ENCODE measurements at regions of chr21 and their contacts with region 1.

Region 1: GRCh38 chr21:27636656-27637055 is 669.8 kb upstream of the ADAMTS5 start:
- DNase-seq: no peak
- ATAC-seq: no peak
- H3K4me3 ChIP-seq: no peak overlapping the region
- H3K27ac ChIP-seq: no peak overlapping the region
- H3K4me1 ChIP-seq: no peaks in the 10 kb centered on the region
- H3K27me3 ChIP-seq: no peaks in the 10 kb centered on the region
- CTCF ChIP-seq: no peak

Region 2: DNA sequence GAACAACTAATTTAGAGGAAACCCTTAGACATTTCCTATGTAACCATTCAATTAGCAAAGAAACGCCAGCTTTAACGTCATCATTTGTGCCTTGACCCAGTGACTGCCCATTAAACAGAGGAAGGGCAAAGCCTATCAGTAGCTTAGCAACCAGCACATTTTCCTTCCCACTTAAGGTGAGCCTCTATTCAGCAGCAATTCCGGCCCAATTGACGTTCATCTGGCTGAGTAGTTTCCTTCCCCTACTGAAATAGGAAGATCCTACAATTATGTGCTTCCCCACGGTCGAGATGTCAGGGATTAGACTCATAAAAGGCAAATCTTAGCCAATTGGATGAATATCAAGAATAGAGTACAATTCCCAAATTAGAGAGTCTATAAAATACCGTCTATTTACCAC is 187.7 kb before region 1 on chr21:
- intact Hi-C with region 1: no loop called
- DNase-seq: peak in 1 of 2 donors; percentile 66
- ATAC-seq: peak; percentile 85 to 97 (median 94)
- H3K4me3 ChIP-seq: no peak overlapping the region
- H3K27ac ChIP-seq: peak overlapping the region in 5 of 10 donors; percentile 48 to 84 (median 68)
- H3K4me1 ChIP-seq: peaks cover 0 to 17% (median 7%) of the 10 kb centered on the region in 9 donors
- H3K27me3 ChIP-seq: no peaks in the 10 kb centered on the region
- CTCF ChIP-seq: no peak

Region 3: GRCh38 chr21:27480841-27481261 is 155.8 kb before region 1 on chr21:
- intact Hi-C with region 1: no loop called
- DNase-seq: no peak
- ATAC-seq: no peak
- H3K4me3 ChIP-seq: no peak overlapping the region
- H3K27ac ChIP-seq: no peak overlapping the region
- H3K4me1 ChIP-seq: peaks cover 0 to 7% (median 0%) of the 10 kb centered on the region in 9 donors
- H3K27me3 ChIP-seq: no peaks in the 10 kb centered on the region
- CTCF ChIP-seq: no peak

Region 4: DNA sequence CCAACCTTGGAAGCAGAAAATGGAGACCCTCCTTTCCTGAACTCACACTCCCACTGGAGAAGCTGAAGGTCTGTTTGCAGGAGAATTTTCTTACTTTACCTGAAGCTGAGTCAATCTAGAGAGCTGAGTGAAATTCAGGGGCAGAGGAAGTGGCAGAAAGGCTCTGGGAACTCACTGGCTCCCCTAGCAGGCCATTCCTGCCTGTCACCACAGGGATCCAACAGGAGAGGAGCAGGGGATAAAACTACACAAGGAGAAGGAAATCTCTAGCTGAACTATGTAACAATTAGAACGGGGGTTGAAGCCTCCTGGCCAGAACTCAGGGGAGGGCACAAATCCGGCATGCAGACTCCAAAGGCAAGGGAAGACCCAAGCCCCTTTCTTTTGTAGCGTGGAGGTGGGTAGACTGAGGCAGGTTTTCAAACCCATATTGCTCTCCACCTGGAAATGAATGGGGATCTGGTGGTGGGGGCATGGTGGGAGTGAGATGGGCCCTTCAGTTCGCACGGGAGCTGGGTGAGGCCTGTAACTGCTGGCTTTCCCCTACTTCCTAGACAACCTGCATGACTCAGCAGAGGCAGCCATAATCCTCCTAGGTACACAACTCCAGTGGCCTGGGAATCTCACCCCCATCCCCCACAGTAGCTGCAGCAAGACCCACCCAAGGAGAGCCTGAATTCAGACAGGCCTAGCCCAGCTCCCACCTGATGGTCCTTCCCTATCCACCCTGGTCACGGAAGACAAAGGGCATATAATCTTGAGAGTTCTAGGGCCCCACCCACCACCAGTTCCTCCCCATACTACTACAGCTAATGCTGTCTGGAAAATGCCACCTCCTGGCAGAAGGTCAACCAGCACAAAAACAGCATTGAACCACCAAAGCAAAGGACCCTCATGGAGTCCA is 1197.9 kb after region 1 on chr21:
- intact Hi-C with region 1: loop called in 1 of 10 experiments (anchors 5 kb)
- DNase-seq: no peak
- ATAC-seq: no peak
- H3K4me3 ChIP-seq: no peak overlapping the region
- H3K27ac ChIP-seq: no peak overlapping the region
- H3K4me1 ChIP-seq: peaks cover 0 to 9% (median 0%) of the 10 kb centered on the region in 9 donors
- H3K27me3 ChIP-seq: no peaks in the 10 kb centered on the region
- CTCF ChIP-seq: no peak

Measured in heart right ventricle (tissue), 16 donors.